SK-N-SH (cell line): ENCODE measurements at regions of chr16 and their contacts with region 1.

Region 1: GRCh38 chr16:47581112-47581511 is 120.0 kb downstream of the PHKB start:
- DNase-seq: no peak
- H3K4me3 ChIP-seq: no peak overlapping the region
- H3K27ac ChIP-seq: no peak overlapping the region
- H3K4me1 ChIP-seq: no peaks in the 10 kb centered on the region; a peak in 1 of 4 replicates
- H3K27me3 ChIP-seq: no peaks in the 10 kb centered on the region
- CTCF ChIP-seq: no peak
- EP300 ChIP-seq: no peak
- RAD21 ChIP-seq: no peak

Region 2: DNA sequence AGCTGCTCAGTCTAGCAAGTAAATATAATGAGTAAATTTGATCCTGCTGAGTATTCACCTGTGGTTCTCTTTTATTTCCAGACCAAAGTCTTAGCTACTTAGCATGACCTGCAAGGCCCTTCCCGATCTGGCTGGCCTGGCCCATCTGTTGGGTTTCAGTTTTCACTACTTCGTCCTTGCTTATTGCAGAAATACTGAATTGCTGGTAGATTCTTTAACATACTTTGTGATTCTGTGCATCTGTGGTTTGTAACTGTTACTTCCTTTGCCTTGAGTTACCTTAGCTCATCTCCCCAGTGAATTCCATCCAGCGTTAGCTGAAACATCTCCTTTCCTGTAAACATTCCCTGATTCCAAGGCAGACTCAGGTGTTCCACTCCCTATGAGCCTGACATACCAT is 11.1 kb after region 1 on chr16:
- CTCF ChIA-PET with region 1: interaction called, 11 read pairs
- POLR2A ChIA-PET with region 1: no interaction called
- DNase-seq: no peak
- H3K4me3 ChIP-seq: no peak overlapping the region
- H3K27ac ChIP-seq: no peak overlapping the region
- H3K4me1 ChIP-seq: no peaks in the 10 kb centered on the region
- H3K27me3 ChIP-seq: no peaks in the 10 kb centered on the region
- CTCF ChIP-seq: no peak
- EP300 ChIP-seq: no peak
- RAD21 ChIP-seq: no peak